Endothelial cell of umbilical vein (primary cell): ENCODE measurements at regions of chr11 and their contacts with region 1.

Region 1: GRCh38 chr11:64246871-64247728 is at the start of gene PPP1R14B:
- DNase-seq: peak; percentile 80
- H3K4me3 ChIP-seq: peak within 1 kb of the TSS; percentile 67 to 78 (median 75)
- H3K27ac ChIP-seq: peak within 1 kb of the TSS; percentile 47
- H3K4me1 ChIP-seq: peaks cover 28% of the 10 kb centered on the region
- H3K27me3 ChIP-seq: no peaks in the 10 kb centered on the region
- CTCF ChIP-seq: no peak
- POLR2A ChIP-seq: peak; percentile 14
- total RNA-seq, gene PPP1R14B: 431 TPM in 2 replicates

Region 2: GRCh38 chr11:64263021-64263946 is 16.2 kb after region 1 on chr11:
- CTCF ChIA-PET with region 1: interaction called, 60 read pairs
- POLR2A ChIA-PET with region 1: interaction called, 10 read pairs
- dilution Hi-C with region 1: no loop called
- intact Hi-C with region 1: loop called (anchors 1 kb)
- DNase-seq: peak; percentile 85
- H3K4me3 ChIP-seq: no peak overlapping the region
- H3K27ac ChIP-seq: peak overlapping the region; percentile 83
- H3K4me1 ChIP-seq: peaks cover 35% of the 10 kb centered on the region
- H3K27me3 ChIP-seq: no peaks in the 10 kb centered on the region
- CTCF ChIP-seq: no peak
- POLR2A ChIP-seq: peak; percentile 56

Region 3: GRCh38 chr11:64284048-64284961 is 37.2 kb after region 1 on chr11 and contains the start of gene BAD:
- CTCF ChIA-PET with region 1: no interaction called
- POLR2A ChIA-PET with region 1: no interaction called
- dilution Hi-C with region 1: no loop called
- intact Hi-C with region 1: loop called (anchors 1 kb)
- DNase-seq: peak; percentile 91
- H3K4me3 ChIP-seq: peak within 1 kb of the TSS; percentile 42 to 49 (median 44)
- H3K27ac ChIP-seq: peak within 1 kb of the TSS; percentile 35
- H3K4me1 ChIP-seq: peaks cover 11% of the 10 kb centered on the region
- H3K27me3 ChIP-seq: no peaks in the 10 kb centered on the region
- CTCF ChIP-seq: no peak
- POLR2A ChIP-seq: peak; percentile 52
- total RNA-seq, gene BAD: 61.6 and 65.3 TPM in 2 replicates